ENCODE measurements at regions of chr14 and their contacts with region 1.

Region 1: DNA sequence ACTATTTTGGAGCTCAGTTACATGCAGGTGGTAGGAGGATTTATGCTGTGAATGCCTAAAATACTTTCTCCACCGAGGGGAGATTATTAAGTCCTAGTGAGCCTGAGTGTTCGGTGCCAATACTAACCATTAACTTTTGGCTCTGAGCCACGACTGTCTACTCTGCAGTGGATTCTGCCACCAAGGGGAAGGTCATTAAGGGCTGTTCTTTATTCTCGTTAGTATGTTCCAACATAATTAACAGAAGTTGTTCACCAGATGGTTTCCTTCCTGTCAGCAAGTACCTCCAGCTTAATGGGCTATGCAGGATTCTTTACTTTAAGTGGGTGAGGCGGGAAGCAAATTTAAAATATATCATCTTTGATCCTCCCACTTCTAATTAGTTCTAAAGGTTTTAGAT is 326.3 kb downstream of the BMP4 start:
- DNase-seq: no peak
- H3K4me3 ChIP-seq: no peak overlapping the region
- H3K27ac ChIP-seq: no peak overlapping the region
- H3K4me1 ChIP-seq: no peaks in the 10 kb centered on the region
- H3K27me3 ChIP-seq: no peaks in the 10 kb centered on the region
- CTCF ChIP-seq: no peak
- POLR2A ChIP-seq: no peak

Region 2: DNA sequence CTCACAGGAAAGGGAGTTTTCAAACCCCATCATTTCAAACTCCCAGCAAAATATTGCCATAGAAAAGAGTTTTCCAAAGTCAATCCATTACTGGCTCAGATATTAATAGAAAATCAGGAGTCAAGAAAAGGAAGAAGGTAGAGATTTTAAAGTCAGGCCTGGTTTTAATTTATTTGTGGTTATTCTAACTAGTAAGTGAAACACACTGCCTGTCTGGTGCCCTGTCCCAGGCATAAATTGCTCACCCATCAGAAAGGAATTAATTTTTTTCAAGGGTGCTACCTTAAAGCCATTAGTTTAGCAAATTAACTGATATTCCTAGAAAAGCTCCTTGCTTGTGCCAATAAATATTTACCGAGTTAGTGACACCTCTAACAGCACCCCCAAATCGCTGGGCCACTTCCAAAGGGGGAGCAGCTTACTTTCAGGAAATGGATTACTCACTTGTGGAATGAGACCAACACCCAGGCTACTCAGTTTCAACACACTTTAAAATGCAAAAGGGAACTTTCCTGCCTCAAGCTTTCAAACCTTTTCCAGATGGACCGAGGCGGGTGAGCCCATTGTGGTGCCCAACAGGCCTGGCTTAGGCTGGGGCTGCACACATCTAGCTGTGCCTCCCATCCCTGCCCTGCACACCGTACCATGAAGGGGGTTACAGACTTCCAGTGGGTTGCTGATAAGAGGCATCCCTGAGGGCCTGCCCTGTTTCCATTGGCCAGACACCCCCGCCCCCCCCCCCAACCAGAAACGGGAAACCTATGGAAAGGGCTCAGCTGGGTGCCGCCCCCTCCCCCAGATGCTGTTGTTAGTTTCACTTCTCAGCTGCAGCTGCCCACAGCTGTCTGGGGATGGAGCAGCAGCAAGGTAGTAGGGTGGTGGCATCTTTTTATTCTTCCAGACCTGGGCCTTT is 1053.8 kb after region 1 on chr14:
- intact Hi-C with region 1: loop called (anchors 5 kb)
- DNase-seq: no peak
- H3K4me3 ChIP-seq: no peak overlapping the region
- H3K27ac ChIP-seq: peak overlapping the region; percentile 71 to 92
- H3K4me1 ChIP-seq: no peaks in the 10 kb centered on the region
- H3K27me3 ChIP-seq: no peaks in the 10 kb centered on the region
- CTCF ChIP-seq: no peak
- POLR2A ChIP-seq: no peak

Measured in breast epithelium (tissue), 4 donors.